Spleen (tissue), 13 donors: ENCODE measurements at regions of chr15 and their contacts with region 1.

Region 1: GRCh38 chr15:35444557-35445204 is 101.3 kb downstream of the DPH6 start:
- DNase-seq: no peak
- H3K4me3 ChIP-seq: no peak overlapping the region
- H3K27ac ChIP-seq: no peak overlapping the region
- H3K4me1 ChIP-seq: no peaks in the 10 kb centered on the region
- H3K27me3 ChIP-seq: no peaks in the 10 kb centered on the region
- CTCF ChIP-seq: peak in 9 of 11 experiments; percentile 33 to 77 (median 65)
- POLR2A ChIP-seq: no peak

Region 2: GRCh38 chr15:35195649-35196048 is 249.0 kb before region 1 on chr15:
- intact Hi-C with region 1: no loop called
- DNase-seq: no peak
- H3K4me3 ChIP-seq: no peak overlapping the region
- H3K27ac ChIP-seq: no peak overlapping the region
- H3K4me1 ChIP-seq: no peaks in the 10 kb centered on the region
- H3K27me3 ChIP-seq: no peaks in the 10 kb centered on the region
- CTCF ChIP-seq: no peak
- POLR2A ChIP-seq: no peak

Region 3: DNA sequence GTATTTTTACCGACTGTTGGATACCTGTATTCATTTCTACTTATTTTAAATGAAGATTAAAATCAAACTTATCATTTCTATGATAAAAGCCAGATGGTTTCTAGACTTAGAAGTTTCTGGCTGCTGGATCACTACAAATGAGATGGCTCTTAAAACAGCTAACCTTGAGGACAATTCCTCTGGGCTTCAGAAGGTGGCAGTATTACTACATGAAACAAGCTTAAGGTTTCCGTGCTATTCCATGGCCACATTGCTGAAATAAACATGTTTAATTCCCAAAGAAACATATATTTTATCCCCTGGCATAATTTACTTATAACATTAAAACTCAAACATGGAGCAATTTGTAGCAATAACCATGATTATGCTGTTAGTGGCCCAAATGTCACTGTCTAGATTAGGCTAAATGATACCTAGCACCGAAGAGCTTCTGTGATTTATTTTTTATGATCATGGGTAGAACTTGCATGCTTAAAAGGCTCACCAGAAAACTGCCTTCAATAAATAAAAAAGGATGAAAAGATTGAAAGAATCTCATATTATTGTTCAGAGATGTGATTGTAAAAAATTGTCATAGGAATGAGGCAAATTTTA is 155.6 kb before region 1 on chr15:
- intact Hi-C with region 1: loop called (anchors 10 kb)
- DNase-seq: no peak
- H3K4me3 ChIP-seq: no peak overlapping the region
- H3K27ac ChIP-seq: no peak overlapping the region
- H3K4me1 ChIP-seq: no peaks in the 10 kb centered on the region
- H3K27me3 ChIP-seq: no peaks in the 10 kb centered on the region
- CTCF ChIP-seq: peak in 8 of 11 experiments; percentile 12 to 65 (median 60)
- POLR2A ChIP-seq: no peak